ENCODE measurements at regions of chr15 and their contacts with region 1.

Region 1: GRCh38 chr15:91302588-91303439 is 202.8 kb downstream of the SV2B start:
- DNase-seq: peak; percentile 50
- ATAC-seq: peak; percentile 73
- H3K4me3 Mint-ChIP-seq: no peak overlapping the region
- H3K27ac Mint-ChIP-seq: no peak overlapping the region
- H3K4me1 Mint-ChIP-seq: peaks cover 10% of the 10 kb centered on the region
- H3K27me3 Mint-ChIP-seq: peaks cover 67% of the 10 kb centered on the region

Region 2: DNA sequence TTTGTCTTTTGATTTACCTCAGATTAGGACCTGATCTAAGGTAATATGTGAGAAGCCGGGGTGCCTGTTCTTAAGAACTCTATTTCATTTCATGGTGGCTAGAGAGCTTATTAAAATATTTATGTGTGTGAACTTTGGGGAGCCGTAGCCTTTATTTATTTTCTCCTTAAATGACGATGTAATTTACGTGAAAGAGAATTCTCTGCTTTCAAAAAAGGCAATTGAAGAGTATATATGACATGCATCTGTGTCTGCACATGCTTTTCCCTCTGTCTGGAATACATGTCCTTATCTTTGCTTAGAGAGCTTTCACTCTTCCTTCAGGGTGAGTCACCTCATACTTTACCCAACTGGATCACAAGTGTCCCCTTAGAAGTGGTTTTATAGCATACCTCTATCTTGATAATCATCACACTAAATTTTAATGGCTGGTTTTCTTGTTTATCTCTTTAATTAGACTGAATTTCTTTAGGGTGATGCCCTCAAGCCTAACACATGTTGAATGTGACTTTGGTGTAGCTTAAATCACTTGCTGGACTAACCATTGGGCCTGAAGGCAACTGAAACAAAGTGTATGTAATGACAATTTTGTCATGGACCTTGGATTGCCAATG is 23.9 kb before region 1 on chr15:
- CTCF ChIA-PET with region 1: no interaction called
- DNase-seq: no peak
- ATAC-seq: no peak
- H3K4me3 Mint-ChIP-seq: no peak overlapping the region
- H3K27ac Mint-ChIP-seq: no peak overlapping the region
- H3K4me1 Mint-ChIP-seq: no peaks in the 10 kb centered on the region
- H3K27me3 Mint-ChIP-seq: peaks cover 33% of the 10 kb centered on the region

Region 3: DNA sequence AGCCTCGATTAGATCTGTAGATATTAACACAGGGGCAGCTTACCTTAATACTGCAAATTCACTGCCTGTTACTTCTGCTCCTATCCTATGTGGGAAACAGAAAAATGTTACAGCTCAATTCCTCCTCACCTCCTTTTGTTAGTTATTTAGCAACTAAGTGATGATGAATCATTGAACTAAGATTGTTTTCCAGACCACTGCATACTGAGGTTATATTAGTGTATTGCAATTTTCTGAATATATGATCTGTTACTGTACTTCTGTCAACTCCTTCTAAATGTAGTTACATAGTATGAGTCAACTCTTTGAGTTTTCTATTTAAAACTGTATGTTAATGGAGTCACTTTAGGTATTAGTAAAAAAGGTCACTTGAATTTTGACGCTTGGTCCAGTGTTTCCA is 219.2 kb after region 1 on chr15:
- CTCF ChIA-PET with region 1: interaction called, 13 read pairs
- DNase-seq: no peak
- ATAC-seq: no peak
- H3K4me3 Mint-ChIP-seq: no peak overlapping the region
- H3K27ac Mint-ChIP-seq: no peak overlapping the region
- H3K4me1 Mint-ChIP-seq: peaks cover 26% of the 10 kb centered on the region
- H3K27me3 Mint-ChIP-seq: peaks cover 7% of the 10 kb centered on the region